A549 (cell line): ENCODE measurements at regions of chr4 and their contacts with region 1.

Region 1: GRCh38 chr4:6250235-6250983 is 19.2 kb upstream of the WFS1 start:
- DNase-seq: peak; percentile 58 to 62
- ATAC-seq: peak; percentile 61 to 74; a peak in 5 of 6 replicates
- H3K4me3 ChIP-seq: no peak overlapping the region
- H3K27ac ChIP-seq: no peak overlapping the region
- H3K4me1 ChIP-seq: no peaks in the 10 kb centered on the region
- CTCF ChIP-seq: peak; percentile 66
- EP300 ChIP-seq: no peak
- POLR2A ChIP-seq: no peak
- RAD21 ChIP-seq: peak; percentile 76 to 77

Region 2: DNA sequence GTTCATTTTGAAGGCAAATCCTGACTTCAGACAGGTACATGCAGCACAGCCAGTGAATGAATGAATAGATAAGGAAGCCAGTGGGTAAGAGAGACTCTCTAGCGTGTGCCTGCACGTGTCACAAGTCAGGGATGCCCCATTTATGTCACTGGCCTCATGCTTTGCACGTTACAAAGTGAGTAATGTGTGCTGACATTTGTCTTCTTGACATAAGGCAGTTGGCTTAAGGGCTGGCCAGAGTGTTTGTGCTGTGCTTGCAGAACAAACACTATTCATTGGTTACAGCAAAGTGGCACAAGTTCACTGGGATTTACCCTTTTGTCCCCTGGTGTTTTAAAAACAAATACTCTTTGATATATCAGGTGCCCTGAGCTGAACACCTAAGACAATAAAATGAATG is 413.5 kb before region 1 on chr4:
- CTCF ChIA-PET with region 1: no interaction called
- POLR2A ChIA-PET with region 1: no interaction called
- DNase-seq: no peak
- ATAC-seq: no peak
- H3K4me3 ChIP-seq: no peak overlapping the region
- H3K27ac ChIP-seq: no peak overlapping the region
- H3K4me1 ChIP-seq: no peaks in the 10 kb centered on the region
- CTCF ChIP-seq: no peak
- EP300 ChIP-seq: no peak
- POLR2A ChIP-seq: no peak
- RAD21 ChIP-seq: no peak

Region 3: GRCh38 chr4:6264225-6264540 is 13.8 kb after region 1 on chr4:
- CTCF ChIA-PET with region 1: interaction called, 75 read pairs
- POLR2A ChIA-PET with region 1: no interaction called
- DNase-seq: peak in 1 of 2 experiments; percentile 43
- ATAC-seq: peak in 1 of 2 experiments; percentile 86; a peak in 3 of 6 replicates
- H3K4me3 ChIP-seq: no peak overlapping the region
- H3K27ac ChIP-seq: no peak overlapping the region
- H3K4me1 ChIP-seq: 0 out of 3 replicates have a peak, but pooled peaks cover 4% of the 10 kb centered on the region
- CTCF ChIP-seq: peak; percentile 27; the same call in 2 of the 3 replicates
- EP300 ChIP-seq: no peak
- POLR2A ChIP-seq: no peak
- RAD21 ChIP-seq: peak; percentile 45 to 67; a peak in 4 of 5 replicates

Region 4: DNA sequence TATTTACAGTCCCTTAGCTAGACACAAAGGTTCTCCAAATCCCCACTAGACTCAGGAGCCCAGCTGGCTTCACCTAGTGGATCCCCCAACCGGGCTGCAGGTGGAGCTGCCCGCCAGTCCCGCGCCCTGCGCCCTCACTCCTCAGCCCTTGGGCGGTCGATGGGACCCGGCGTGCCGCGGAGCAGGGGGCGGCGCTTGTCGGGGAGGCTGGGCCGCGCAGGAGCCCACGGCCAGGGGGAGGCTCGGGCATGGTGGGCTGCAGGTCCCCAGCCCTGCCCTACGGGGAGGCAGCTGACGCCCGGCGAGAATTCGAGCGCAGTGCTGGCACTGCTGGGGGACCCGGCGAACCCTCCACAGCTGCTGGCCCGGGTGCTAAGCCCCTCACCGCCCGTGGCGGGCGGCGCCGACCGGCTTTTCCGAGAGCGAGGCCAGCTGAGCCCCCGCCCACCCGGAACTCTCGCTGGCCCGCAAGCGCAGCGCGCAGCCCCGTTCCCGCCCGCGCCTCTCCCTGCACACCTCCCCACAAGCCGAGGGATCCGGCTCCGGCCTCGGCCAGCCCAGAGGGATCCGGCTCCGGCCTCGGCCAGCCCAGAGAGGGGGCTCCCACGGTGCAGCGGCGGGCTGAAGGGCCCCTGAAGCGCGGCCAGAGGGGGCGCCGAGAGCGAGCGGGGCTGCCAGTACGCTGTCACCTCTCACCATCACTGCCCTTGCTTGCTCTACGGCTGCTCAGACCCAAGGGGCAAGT is 58.7 kb after region 1 on chr4:
- CTCF ChIA-PET with region 1: interaction called, 13 read pairs
- POLR2A ChIA-PET with region 1: no interaction called
- DNase-seq: peak in 1 of 2 experiments; percentile 29
- ATAC-seq: peak; percentile 62 to 83; a peak in 5 of 6 replicates
- H3K4me3 ChIP-seq: peak overlapping the region; percentile 38
- H3K27ac ChIP-seq: peak overlapping the region in 1 of 2 experiments; percentile 74; a peak in 3 of 6 replicates
- H3K4me1 ChIP-seq: no peaks in the 10 kb centered on the region
- CTCF ChIP-seq: no peak
- EP300 ChIP-seq: no peak
- POLR2A ChIP-seq: no peak
- RAD21 ChIP-seq: no peak

Region 5: DNA sequence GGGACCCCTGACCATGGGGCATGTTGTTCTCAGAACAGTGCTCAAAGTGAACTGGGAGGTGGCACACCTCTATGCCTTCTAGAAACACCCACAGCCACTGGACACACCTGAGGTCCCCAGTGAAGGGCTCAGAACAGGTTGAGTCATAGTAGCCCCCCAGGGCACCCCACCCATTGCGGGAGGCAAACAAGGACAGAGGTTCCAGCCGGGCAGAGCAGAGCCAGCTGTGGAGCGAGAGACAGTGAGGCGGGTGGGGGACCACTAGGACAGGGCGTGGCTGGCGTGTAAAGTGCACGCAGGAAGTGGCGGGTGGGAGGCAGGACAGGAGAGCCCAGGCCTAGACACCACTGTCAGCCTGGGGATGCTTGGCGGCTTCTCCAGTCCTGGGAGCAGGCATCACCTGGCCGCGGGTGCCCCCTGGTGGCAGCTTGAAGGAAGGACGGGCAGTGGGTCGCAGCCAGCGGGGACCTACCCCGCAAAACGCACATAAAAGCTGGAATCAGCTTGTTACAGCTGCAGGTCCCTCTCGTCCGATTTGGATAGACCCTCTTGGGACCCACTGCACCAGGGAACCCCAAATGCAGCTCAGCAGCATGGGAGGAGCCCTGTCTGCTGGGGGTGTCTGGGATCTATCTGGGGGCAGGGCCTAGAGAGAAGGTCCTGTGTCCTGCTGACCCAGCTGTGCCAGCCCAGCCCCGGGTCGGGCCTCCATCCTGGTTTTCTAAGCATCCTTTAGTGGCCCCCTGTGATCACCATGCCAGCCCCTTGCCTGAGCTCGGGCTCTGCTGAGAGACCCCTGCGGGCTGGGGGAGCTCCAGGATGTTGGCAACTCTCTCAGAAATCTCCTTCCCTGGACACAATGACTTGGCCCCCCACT is 76.9 kb after region 1 on chr4:
- CTCF ChIA-PET with region 1: interaction called, 408 read pairs
- POLR2A ChIA-PET with region 1: no interaction called
- DNase-seq: peak; percentile 49 to 65
- ATAC-seq: peak; percentile 60 to 89
- H3K4me3 ChIP-seq: no peak overlapping the region
- H3K27ac ChIP-seq: no peak overlapping the region
- H3K4me1 ChIP-seq: no peaks in the 10 kb centered on the region
- CTCF ChIP-seq: peak; percentile 72
- EP300 ChIP-seq: no peak
- POLR2A ChIP-seq: no peak
- RAD21 ChIP-seq: peak; percentile 82

Region 6: DNA sequence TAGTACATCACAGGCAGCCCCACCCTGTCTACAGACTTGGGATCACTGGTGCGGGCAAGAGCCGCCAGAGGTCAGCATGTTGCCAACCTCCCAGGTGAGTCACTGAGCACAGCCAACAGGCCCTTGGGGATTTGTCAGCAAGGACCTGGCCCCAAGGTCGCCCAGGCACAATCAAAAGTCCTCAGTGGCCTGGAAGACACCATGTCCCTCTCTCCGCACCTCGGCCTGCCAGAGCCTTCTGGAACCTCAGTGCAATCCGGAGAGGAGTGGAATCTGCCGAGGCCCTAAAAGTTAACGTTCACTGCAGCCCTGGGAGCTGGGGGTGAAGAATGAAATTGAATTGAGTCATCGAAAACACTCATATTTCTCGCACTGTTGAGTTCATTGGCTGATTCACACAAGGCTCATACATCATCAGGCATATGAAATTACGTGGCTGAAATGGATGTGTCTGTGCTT is 93.6 kb after region 1 on chr4:
- CTCF ChIA-PET with region 1: interaction called, 30 read pairs
- POLR2A ChIA-PET with region 1: no interaction called
- DNase-seq: peak; percentile 85
- ATAC-seq: peak; percentile 96 to 97
- H3K4me3 ChIP-seq: no peak overlapping the region
- H3K27ac ChIP-seq: peak overlapping the region; percentile 73 to 87
- H3K4me1 ChIP-seq: peaks cover 20% of the 10 kb centered on the region
- CTCF ChIP-seq: peak; percentile 52
- EP300 ChIP-seq: no peak
- POLR2A ChIP-seq: no peak
- RAD21 ChIP-seq: peak; percentile 51 to 53

Region 7: GRCh38 chr4:6386091-6386490 is 135.7 kb after region 1 on chr4:
- CTCF ChIA-PET with region 1: no interaction called
- POLR2A ChIA-PET with region 1: no interaction called
- DNase-seq: no peak
- ATAC-seq: no peak
- H3K4me3 ChIP-seq: no peak overlapping the region
- H3K27ac ChIP-seq: no peak overlapping the region
- H3K4me1 ChIP-seq: no peaks in the 10 kb centered on the region
- CTCF ChIP-seq: no peak
- EP300 ChIP-seq: no peak
- POLR2A ChIP-seq: no peak
- RAD21 ChIP-seq: no peak

Region 8: GRCh38 chr4:6546681-6547447 is 296.5 kb after region 1 on chr4:
- CTCF ChIA-PET with region 1: interaction called, 36 read pairs
- POLR2A ChIA-PET with region 1: no interaction called
- DNase-seq: peak; percentile 20 to 75
- ATAC-seq: peak in 1 of 2 experiments; percentile 78; a peak in 4 of 6 replicates
- H3K4me3 ChIP-seq: no peak overlapping the region
- H3K27ac ChIP-seq: no peak overlapping the region
- H3K4me1 ChIP-seq: no peaks in the 10 kb centered on the region
- CTCF ChIP-seq: peak; percentile 68
- EP300 ChIP-seq: no peak
- POLR2A ChIP-seq: no peak
- RAD21 ChIP-seq: peak; percentile 59 to 63